ENCODE measurements at regions of chr4 and their contacts with region 1.

Region 1: DNA sequence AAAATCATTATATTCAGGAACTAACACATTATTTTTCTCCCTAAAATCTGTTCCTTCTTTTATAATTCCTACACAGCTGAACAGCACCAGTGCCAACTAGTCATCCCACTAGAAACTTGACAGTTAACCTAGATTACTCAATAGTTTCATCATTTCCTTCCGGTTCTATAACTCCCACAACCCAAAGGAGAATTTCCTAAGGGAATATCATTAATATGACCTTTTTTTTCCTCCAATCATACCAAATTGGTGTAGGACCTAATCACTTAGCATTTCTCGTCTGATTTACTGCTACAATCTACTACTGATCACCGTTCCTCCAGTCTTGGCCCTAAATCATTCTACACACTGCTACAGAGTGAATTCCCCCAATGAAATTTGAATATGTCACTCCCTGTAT is 45.9 kb downstream of the WDFY3 start:
- DNase-seq: no peak

Region 2: GRCh38 chr4:85200106-85200505 is 279.5 kb after region 1 on chr4:
- intact Hi-C with region 1: no loop called
- DNase-seq: no peak

Region 3: DNA sequence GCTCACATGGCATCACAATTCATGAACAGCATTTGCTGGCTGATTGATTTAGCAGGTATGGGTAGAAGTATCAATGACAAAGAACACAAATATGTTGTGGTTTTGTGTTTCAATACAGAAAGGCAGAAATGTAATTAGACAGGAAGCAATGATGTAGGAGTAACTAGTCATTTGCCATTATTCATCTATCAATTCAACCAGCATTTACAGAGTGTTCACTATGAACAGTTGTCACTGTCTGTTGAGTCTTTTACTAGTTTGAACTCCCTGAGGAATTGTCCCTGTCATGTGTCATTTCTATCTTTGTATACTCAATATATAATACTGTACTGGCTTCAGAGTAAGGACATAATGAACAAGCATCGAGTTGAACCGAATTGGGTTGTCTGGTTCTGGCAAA is 502.8 kb after region 1 on chr4:
- intact Hi-C with region 1: loop called in 1 of 2 experiments (anchors 5 kb)
- DNase-seq: no peak

Measured in posterior vena cava (tissue), 2 donors.